CD8-positive, alpha-beta T cell (primary cell): ENCODE measurements at regions of chr3 and their contacts with region 1.

Region 1: GRCh38 chr3:120795017-120795648 is 52.6 kb downstream of the GTF2E1 start:
- DNase-seq: peak; percentile 71 to 93 (median 80)
- ATAC-seq: peak; percentile 96
- H3K4me3 ChIP-seq: no peak overlapping the region
- H3K4me3 Mint-ChIP-seq: no peak overlapping the region
- H3K27ac ChIP-seq: no peak overlapping the region
- H3K27ac Mint-ChIP-seq: no peak overlapping the region
- H3K4me1 ChIP-seq: peaks cover 6% of the 10 kb centered on the region
- H3K4me1 Mint-ChIP-seq: peaks cover 12% of the 10 kb centered on the region
- H3K27me3 ChIP-seq: no peaks in the 10 kb centered on the region
- H3K27me3 Mint-ChIP-seq: no peaks in the 10 kb centered on the region
- CTCF ChIP-seq: peak; percentile 85

Region 2: DNA sequence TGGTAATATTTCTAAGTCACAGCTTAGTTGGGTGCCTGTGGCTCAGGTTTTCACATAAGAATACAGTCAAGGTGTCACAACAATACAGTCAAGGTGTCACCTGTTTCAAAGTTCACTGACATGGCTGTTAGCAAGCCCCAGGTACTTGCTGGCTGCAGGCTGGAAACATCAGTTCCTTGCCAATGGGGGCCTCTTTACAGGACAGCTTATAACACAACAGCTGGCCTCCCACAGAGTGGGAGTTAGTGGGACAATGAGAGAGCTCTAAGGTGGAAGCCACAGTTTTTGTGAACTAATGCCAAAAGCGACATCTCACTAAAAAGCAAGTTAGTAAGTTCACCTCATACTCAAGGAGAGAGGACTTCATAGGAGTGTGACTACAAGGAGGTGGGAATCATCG is 555.5 kb before region 1 on chr3:
- CTCF ChIA-PET with region 1: interaction called, 5 read pairs
- POLR2A ChIA-PET with region 1: no interaction called
- intact Hi-C with region 1: loop called (anchors 2 to 5 kb)
- DNase-seq: no peak
- ATAC-seq: no peak
- H3K4me3 ChIP-seq: no peak overlapping the region
- H3K4me3 Mint-ChIP-seq: no peak overlapping the region
- H3K27ac ChIP-seq: no peak overlapping the region
- H3K27ac Mint-ChIP-seq: no peak overlapping the region
- H3K4me1 ChIP-seq: no peaks in the 10 kb centered on the region
- H3K4me1 Mint-ChIP-seq: no peaks in the 10 kb centered on the region
- H3K27me3 ChIP-seq: peaks cover 0 to 2% of the 10 kb centered on the region in 2 experiments
- H3K27me3 Mint-ChIP-seq: peaks cover 31% of the 10 kb centered on the region
- CTCF ChIP-seq: no peak

Region 3: GRCh38 chr3:120417272-120417911 is 377.7 kb before region 1 on chr3:
- CTCF ChIA-PET with region 1: interaction called, 14 read pairs
- POLR2A ChIA-PET with region 1: no interaction called
- intact Hi-C with region 1: loop called (anchors 2 to 10 kb)
- DNase-seq: peak; percentile 66 to 90 (median 80)
- ATAC-seq: peak; percentile 99
- H3K4me3 ChIP-seq: peak overlapping the region; percentile 47 to 55
- H3K4me3 Mint-ChIP-seq: peak overlapping the region; percentile 84
- H3K27ac ChIP-seq: no peak overlapping the region
- H3K27ac Mint-ChIP-seq: no peak overlapping the region
- H3K4me1 ChIP-seq: no peaks in the 10 kb centered on the region
- H3K4me1 Mint-ChIP-seq: peaks cover 21% of the 10 kb centered on the region
- H3K27me3 ChIP-seq: no peaks in the 10 kb centered on the region
- H3K27me3 Mint-ChIP-seq: peaks cover 4% of the 10 kb centered on the region
- CTCF ChIP-seq: peak; percentile 87

Region 4: GRCh38 chr3:120596116-120596852 is 198.8 kb before region 1 on chr3 and contains the start of gene NDUFB4:
- CTCF ChIA-PET with region 1: interaction called, 29 read pairs
- POLR2A ChIA-PET with region 1: interaction called, 8 read pairs
- intact Hi-C with region 1: loop called in 1 of 2 experiments (anchors 1 kb)
- DNase-seq: peak; percentile 87 to 99 (median 95)
- ATAC-seq: peak; percentile 92
- H3K4me3 ChIP-seq: peak within 1 kb of the TSS; percentile 77 to 92
- H3K4me3 Mint-ChIP-seq: peak within 1 kb of the TSS; percentile 94
- H3K27ac ChIP-seq: peak within 1 kb of the TSS; percentile 91 to 95
- H3K27ac Mint-ChIP-seq: peak within 1 kb of the TSS; percentile 97
- H3K4me1 ChIP-seq: peaks cover 34% of the 10 kb centered on the region
- H3K4me1 Mint-ChIP-seq: peaks cover 12% of the 10 kb centered on the region
- H3K27me3 ChIP-seq: no peaks in the 10 kb centered on the region
- H3K27me3 Mint-ChIP-seq: no peaks in the 10 kb centered on the region
- CTCF ChIP-seq: no peak
- total RNA-seq, gene NDUFB4: 63.2 to 71.5 TPM

Region 5: GRCh38 chr3:120772081-120772480 is 23.1 kb before region 1 on chr3:
- CTCF ChIA-PET with region 1: interaction called, 22 read pairs
- POLR2A ChIA-PET with region 1: no interaction called
- intact Hi-C with region 1: no loop called
- DNase-seq: no peak
- ATAC-seq: no peak
- H3K4me3 ChIP-seq: no peak overlapping the region
- H3K4me3 Mint-ChIP-seq: no peak overlapping the region
- H3K27ac ChIP-seq: no peak overlapping the region
- H3K27ac Mint-ChIP-seq: no peak overlapping the region
- H3K4me1 ChIP-seq: peaks cover 9% of the 10 kb centered on the region
- H3K4me1 Mint-ChIP-seq: peaks cover 31% of the 10 kb centered on the region
- H3K27me3 ChIP-seq: no peaks in the 10 kb centered on the region
- H3K27me3 Mint-ChIP-seq: no peaks in the 10 kb centered on the region
- CTCF ChIP-seq: no peak

Region 6: DNA sequence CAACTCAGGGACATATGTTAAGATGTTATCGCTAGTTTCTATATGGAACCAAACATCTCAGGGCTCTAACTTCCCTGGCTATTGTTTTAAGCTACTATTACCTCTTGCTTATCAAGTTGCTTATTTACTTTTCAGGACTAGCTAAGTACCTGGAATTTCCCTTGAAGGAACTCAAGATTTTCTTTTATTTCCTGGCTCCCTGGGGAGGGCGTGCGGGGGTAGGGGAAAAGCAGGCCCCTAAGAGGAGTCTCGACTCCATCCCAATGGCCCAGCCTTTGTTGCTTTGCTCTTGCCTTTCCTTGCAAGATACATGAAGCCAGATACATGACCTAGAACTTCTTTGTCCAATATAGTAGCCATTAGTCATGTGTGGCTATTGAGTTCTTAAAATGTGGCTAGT is 35.9 kb after region 1 on chr3:
- CTCF ChIA-PET with region 1: no interaction called
- POLR2A ChIA-PET with region 1: no interaction called
- intact Hi-C with region 1: no loop called
- DNase-seq: no peak
- ATAC-seq: no peak
- H3K4me3 ChIP-seq: no peak overlapping the region
- H3K4me3 Mint-ChIP-seq: no peak overlapping the region
- H3K27ac ChIP-seq: no peak overlapping the region
- H3K27ac Mint-ChIP-seq: no peak overlapping the region
- H3K4me1 ChIP-seq: no peaks in the 10 kb centered on the region
- H3K4me1 Mint-ChIP-seq: no peaks in the 10 kb centered on the region
- H3K27me3 ChIP-seq: no peaks in the 10 kb centered on the region
- H3K27me3 Mint-ChIP-seq: peaks cover 11% of the 10 kb centered on the region
- CTCF ChIP-seq: no peak